CD4-positive, alpha-beta T cell (primary cell): ENCODE measurements at regions of chr2 and their contacts with region 1.

Region 1: DNA sequence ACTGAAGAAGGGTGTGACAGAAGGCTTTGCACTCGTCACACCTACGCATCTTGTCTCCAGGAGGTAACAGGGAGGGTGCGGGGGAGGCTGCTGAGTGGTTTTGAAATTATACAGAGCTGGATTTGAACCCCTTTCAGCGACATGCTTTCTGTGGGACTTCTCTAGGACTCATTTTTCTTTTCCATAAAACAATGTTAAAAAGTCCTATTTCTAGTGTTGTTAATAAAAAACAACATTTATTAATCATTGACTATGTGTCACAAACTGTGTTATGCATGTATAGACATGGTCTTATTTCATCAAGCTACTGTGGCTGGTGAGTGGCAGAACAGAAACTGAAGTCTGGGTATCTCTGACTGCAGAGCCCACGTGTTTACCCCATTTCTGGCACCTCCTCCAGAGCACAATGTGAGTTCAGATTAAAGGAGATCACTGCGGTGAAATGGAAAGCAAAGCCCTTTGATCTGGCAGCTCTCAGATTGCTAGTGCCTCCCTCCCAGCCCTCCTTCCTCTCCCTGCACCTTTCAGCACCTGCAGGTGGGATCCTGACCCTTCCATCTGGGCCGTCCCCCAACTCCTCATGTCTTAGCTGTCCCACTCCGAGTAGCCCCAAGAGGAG is 315.5 kb upstream of the MYT1L start:
- DNase-seq: peak in 13 of 14 experiments; percentile 8 to 80 (median 46)
- ATAC-seq: peak; percentile 91
- H3K4me3 ChIP-seq: peak overlapping the region; percentile 22
- H3K4me3 Mint-ChIP-seq: peak overlapping the region; percentile 83
- H3K27ac ChIP-seq: peak overlapping the region in 1 of 2 donors; percentile 50
- H3K27ac Mint-ChIP-seq: peak overlapping the region; percentile 99
- H3K4me1 ChIP-seq: peaks cover 32% of the 10 kb centered on the region
- H3K4me1 Mint-ChIP-seq: peaks cover 43% of the 10 kb centered on the region
- H3K27me3 ChIP-seq: no peaks in the 10 kb centered on the region
- H3K27me3 Mint-ChIP-seq: no peaks in the 10 kb centered on the region
- CTCF ChIP-seq: no peak

Region 2: DNA sequence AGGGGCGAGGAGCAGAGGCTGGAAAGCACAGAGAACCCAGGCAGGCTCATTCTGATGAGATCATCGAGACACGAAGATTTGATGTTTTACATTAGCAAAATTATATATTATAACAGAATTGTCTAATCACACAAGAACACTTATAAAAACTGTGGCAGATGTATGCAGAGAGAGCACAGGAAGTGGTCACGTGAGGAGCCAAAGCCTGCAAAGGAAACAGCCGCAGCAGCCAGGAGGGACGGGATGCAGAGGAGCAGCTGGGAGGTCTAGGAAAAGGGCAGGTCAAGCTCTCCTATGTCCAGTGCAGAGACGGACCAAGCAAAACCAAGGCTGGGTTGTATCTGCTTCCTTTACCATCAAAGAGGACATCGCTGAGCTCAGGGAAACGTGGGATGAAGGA is 39.7 kb after region 1 on chr2:
- CTCF ChIA-PET with region 1: no interaction called
- POLR2A ChIA-PET with region 1: interaction called, 7 read pairs
- intact Hi-C with region 1: loop called in 1 of 2 experiments (anchors 1 kb)
- DNase-seq: peak in 3 of 14 experiments; percentile 19 to 38 (median 29)
- ATAC-seq: no peak
- H3K4me3 ChIP-seq: peak overlapping the region; percentile 12
- H3K4me3 Mint-ChIP-seq: peak overlapping the region; percentile 55
- H3K27ac ChIP-seq: no peak overlapping the region
- H3K27ac Mint-ChIP-seq: peak overlapping the region; percentile 25
- H3K4me1 ChIP-seq: peaks cover 44% of the 10 kb centered on the region
- H3K4me1 Mint-ChIP-seq: peaks cover 86% of the 10 kb centered on the region
- H3K27me3 ChIP-seq: peaks cover 0 to 4% of the 10 kb centered on the region in 2 experiments
- H3K27me3 Mint-ChIP-seq: no peaks in the 10 kb centered on the region
- CTCF ChIP-seq: no peak